Activated CD4-positive, alpha-beta memory T cell treated with anti-CD3 and anti-CD28 coated beads, Interleukin-2, amount 10 ng/mL, durations not matched to agents 7 days and 5 days (primary cell): ENCODE measurements at regions of chr6 and their contacts with region 1.

Region 1: DNA sequence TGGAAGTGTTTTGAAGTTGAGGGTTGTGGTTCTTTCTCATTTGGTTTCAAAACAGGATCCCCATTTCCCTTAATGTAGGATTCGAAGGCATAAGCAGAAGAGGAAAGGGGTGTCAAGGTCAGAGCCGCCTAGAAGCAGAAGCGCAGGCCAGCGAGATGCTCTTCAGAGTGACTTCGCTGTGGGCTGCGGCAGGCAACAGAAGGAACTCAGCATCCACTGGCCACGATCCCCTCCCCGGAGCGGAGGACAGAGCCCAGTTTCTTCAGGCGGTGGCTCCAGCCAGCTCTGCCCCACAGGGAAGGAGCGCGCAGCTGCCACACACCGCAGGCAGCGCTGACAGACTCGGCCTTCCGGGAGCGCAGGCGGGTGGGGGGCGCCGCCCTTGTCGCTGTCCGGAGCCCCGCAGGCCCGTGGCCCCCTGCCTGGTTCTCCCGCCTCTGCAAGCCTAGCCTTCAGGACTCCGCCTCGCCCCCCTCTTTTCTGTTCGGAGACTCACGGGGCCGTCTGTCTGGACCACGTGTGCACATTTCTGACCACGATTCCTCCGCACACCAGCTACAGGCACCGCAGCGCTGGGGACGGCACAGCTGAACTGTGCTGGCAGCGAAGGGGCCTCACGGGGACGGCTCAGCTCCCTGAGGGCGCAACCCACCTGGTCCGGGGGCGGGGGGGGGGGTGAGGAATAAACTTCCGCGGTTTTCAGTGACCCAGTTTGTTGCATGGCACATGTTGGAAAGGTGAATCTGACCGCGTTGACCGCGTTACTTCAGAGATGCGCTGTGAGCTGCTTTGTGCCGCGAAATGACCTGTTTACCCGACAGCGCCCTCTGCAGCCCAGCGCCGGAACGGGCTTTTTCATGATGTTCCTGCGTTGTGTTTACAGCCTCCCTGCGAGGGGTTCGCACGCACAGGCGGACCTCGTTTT is 26.1 kb downstream of the TTLL2 start:
- DNase-seq: peak; percentile 92
- H3K4me3 Mint-ChIP-seq: peak overlapping the region; percentile 73
- H3K27ac Mint-ChIP-seq: peak overlapping the region; percentile 88
- H3K4me1 Mint-ChIP-seq: peaks cover 29% of the 10 kb centered on the region
- H3K27me3 Mint-ChIP-seq: peaks cover 48% of the 10 kb centered on the region

Region 2: GRCh38 chr6:167291623-167292300 is 59.2 kb before region 1 on chr6:
- CTCF ChIA-PET with region 1: interaction called, 15 read pairs
- POLR2A ChIA-PET with region 1: interaction called, 5 read pairs
- DNase-seq: no peak
- H3K4me3 Mint-ChIP-seq: no peak overlapping the region
- H3K27ac Mint-ChIP-seq: no peak overlapping the region
- H3K4me1 Mint-ChIP-seq: no peaks in the 10 kb centered on the region
- H3K27me3 Mint-ChIP-seq: peaks cover 5% of the 10 kb centered on the region